Activated naive CD4-positive, alpha-beta T cell treated with anti-CD3 and anti-CD28 coated beads for 36 hours (primary cell): ENCODE measurements at regions of chr2 and their contacts with region 1.

Region 1: DNA sequence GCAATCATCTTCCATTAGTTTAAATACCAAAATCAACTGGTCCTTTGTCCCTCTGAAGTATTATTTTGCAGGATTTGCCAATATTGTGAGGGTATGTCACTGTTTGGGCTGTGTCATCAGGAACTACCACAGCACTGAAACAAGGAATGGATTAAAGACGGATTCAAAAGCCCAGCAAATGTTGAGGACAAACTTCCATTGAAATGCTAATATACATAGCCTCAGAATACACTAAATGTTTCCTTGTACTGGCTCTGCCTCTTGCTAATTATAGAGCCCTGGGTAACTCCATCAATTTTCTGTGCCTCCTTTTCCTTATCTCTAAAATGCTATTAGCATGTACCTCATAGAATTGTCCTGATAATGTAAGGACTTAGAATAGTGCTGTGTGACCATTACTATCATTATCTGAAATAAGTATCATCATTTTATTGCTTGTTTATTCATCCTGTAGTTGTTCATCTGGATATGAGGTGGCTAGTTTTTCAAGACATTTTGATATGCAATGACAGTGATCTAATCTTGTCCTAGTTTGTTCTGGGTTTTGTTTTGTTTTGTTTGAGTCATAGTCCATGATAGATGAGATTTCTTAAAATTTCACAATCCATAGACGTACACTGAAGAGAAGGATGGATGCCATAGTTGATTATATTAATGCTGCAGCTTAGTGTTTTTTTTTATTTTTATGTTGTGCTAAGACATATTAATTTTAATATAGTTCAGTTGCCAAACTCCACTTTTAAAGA is 333.4 kb upstream of the KCNH7 start:
- DNase-seq: no peak
- H3K4me3 Mint-ChIP-seq: no peak overlapping the region
- H3K27ac Mint-ChIP-seq: no peak overlapping the region
- H3K4me1 Mint-ChIP-seq: no peaks in the 10 kb centered on the region
- H3K27me3 Mint-ChIP-seq: peaks cover 2% of the 10 kb centered on the region

Region 2: GRCh38 chr2:164430166-164430783 is 1258.3 kb after region 1 on chr2:
- CTCF ChIA-PET with region 1: no interaction called
- intact Hi-C with region 1: loop called (anchors 1 kb)
- DNase-seq: peak; percentile 14
- H3K4me3 Mint-ChIP-seq: no peak overlapping the region
- H3K27ac Mint-ChIP-seq: no peak overlapping the region
- H3K4me1 Mint-ChIP-seq: no peaks in the 10 kb centered on the region
- H3K27me3 Mint-ChIP-seq: no peaks in the 10 kb centered on the region

Region 3: DNA sequence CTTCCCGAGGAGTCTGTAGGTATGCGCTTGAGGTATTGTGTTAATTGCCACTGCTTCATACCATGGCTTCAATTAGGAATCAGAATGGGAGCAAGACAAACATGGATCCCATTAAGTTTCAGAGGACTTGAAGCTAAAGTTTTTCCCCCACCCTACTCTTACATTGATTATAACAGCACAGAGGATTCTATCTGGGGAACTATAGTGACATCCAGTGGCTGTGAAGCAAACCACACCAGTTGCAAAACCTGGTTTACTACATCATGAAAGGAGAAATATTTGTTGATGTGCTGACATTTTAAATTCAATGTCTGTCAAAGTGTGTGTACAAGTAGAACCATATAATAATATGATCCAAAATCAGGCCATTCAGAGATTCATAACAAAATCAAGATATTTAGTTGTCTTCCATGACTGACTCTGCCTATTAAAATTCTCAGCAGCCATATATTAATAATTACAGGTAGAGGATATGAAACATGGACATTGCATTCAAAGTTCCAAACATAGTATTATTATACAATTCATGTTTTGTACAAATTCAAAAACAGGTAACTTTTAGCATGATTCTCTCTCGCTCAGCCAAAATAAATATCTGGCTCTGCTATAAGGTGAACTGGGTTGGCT is 1366.4 kb after region 1 on chr2:
- CTCF ChIA-PET with region 1: no interaction called
- intact Hi-C with region 1: loop called (anchors 5 kb)
- DNase-seq: no peak
- H3K4me3 Mint-ChIP-seq: no peak overlapping the region
- H3K27ac Mint-ChIP-seq: no peak overlapping the region
- H3K4me1 Mint-ChIP-seq: no peaks in the 10 kb centered on the region
- H3K27me3 Mint-ChIP-seq: no peaks in the 10 kb centered on the region

Region 4: GRCh38 chr2:164599966-164600589 is 1428.1 kb after region 1 on chr2:
- CTCF ChIA-PET with region 1: no interaction called
- intact Hi-C with region 1: loop called (anchors 5 kb)
- DNase-seq: peak; percentile 21
- H3K4me3 Mint-ChIP-seq: no peak overlapping the region
- H3K27ac Mint-ChIP-seq: no peak overlapping the region
- H3K4me1 Mint-ChIP-seq: no peaks in the 10 kb centered on the region
- H3K27me3 Mint-ChIP-seq: no peaks in the 10 kb centered on the region

Region 5: DNA sequence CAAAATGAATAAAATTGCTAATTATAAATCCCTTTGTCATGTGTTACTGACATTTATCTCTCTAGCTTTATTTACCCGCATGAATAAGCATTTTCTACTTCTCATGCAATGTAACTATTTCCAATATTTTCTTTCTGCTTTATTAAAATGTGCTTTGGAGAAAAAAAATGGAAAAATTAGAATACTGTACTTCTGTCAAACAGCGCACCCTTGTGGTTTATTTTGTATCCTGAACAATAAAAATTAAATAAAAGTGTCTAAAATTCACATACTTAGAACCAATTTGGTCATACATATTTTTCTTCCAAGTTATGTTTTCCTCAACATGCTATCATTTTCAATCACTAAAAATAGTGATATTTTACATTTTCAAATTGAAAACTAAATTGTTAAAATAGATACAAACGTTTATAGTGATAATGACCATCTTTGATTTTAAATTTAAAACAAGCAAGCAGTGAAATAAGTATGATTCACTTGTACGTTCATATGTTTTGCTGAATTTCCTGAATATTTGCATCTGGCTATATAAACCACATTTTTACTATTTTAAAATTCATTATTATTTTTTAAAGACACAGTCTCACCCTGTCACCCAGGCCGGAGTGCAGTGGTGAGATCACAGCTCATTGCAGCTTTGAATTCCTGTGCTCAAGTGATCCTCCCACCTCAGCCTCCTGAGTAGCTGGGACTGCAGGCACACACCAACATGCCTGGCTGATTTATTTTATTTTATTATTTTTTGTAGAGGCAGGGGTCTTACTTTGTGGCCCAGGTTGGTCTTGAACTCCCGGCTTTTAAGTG is 1545.2 kb after region 1 on chr2:
- CTCF ChIA-PET with region 1: no interaction called
- intact Hi-C with region 1: loop called (anchors 2 kb)
- DNase-seq: no peak
- H3K4me3 Mint-ChIP-seq: no peak overlapping the region
- H3K27ac Mint-ChIP-seq: no peak overlapping the region
- H3K4me1 Mint-ChIP-seq: no peaks in the 10 kb centered on the region
- H3K27me3 Mint-ChIP-seq: no peaks in the 10 kb centered on the region